K562 (cell line): ENCODE measurements at regions of chr16 and their contacts with region 1.

Region 1: DNA sequence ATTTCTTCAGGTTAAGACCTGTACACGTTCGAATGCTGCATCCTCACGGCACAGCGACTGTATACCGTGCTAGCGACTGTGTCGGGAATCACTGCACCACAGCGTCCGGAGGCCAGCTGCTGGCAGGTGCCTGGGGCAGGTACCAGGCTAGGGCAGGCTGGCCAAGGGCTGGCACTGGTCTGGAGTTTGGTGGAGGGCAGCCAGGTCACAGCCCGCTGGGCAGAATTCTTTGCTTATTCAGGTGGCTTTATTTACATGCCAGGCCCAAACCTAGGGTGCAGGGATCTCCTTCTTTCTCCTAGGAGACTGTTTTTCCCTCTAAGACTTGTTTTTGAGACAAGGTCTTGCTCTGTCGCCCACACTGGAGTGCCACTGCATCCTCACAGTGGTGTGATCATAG is 37.9 kb downstream of the COTL1 start:
- DNase-seq: no peak
- ATAC-seq: no peak
- H3K4me3 ChIP-seq: no peak overlapping the region
- H3K27ac ChIP-seq: no peak overlapping the region
- H3K4me1 ChIP-seq: peaks cover 7% of the 10 kb centered on the region in 2 experiments; a peak in 2 of 5 replicates
- H3K27me3 ChIP-seq: no peaks in the 10 kb centered on the region; a peak in 1 of 5 replicates
- CTCF ChIP-seq: no peak
- EP300 ChIP-seq: no peak
- POLR2A ChIP-seq: no peak
- RAD21 ChIP-seq: no peak

Region 2: DNA sequence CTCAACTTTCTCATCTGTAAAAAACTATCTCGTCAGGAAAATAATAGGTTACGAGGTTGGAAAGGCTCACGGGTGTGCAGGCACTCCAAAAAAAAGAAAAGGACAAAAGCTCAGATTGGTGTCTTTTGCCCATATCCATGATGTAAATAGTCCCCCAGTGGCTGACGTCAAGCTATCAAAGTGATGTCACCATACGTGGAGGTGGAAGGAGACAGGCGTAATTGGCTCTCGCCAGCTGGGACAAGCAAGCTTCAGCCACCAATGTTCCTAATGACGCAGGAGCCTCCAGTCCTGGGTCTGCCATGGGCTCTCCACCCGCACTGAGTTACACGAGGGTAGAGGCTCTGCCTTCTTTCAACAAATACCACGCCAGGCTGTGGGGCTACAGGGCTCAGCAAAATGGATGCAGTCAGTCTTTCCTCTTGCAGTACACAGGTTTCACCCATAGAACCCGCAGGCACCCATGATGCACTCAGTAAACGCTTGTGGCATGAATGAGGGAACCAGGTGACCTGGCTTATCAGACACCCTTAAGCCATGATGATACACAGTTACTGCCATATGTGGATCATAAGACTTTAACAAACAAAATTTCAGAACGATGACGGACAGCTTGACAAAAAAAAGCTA is 12.5 kb before region 1 on chr16:
- CTCF ChIA-PET with region 1: no interaction called
- POLR2A ChIA-PET with region 1: interaction called, 15 read pairs
- in situ Hi-C with region 1: no loop called
- intact Hi-C with region 1: no loop called
- DNase-seq: no peak
- ATAC-seq: no peak
- H3K4me3 ChIP-seq: no peak overlapping the region
- H3K27ac ChIP-seq: no peak overlapping the region
- H3K4me1 ChIP-seq: peaks cover 0 to 6% of the 10 kb centered on the region in 2 experiments; a peak in 2 of 5 replicates
- H3K27me3 ChIP-seq: no peaks in the 10 kb centered on the region
- CTCF ChIP-seq: no peak
- EP300 ChIP-seq: no peak
- POLR2A ChIP-seq: no peak
- RAD21 ChIP-seq: no peak

Region 3: DNA sequence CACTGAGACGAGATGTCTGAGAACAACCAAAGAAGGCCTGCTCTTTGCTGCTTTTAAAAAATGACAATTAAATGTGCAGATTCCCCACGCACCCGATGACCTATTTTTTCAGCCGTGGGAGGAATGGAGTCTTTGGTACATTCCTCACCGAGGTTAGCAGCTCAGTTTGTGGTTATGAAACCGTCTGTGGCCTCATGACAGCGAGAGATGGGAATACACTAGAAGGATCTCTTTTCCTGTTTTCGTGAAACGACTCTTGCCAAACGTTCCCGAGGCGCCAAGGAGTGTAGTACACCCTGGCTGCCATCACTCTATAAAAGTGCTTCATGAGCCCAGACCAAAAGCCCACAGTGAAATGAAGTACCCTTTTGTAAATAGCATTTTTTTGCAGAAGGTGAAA is 327.6 kb after region 1 on chr16:
- CTCF ChIA-PET with region 1: no interaction called
- POLR2A ChIA-PET with region 1: no interaction called
- in situ Hi-C with region 1: no loop called
- intact Hi-C with region 1: no loop called
- DNase-seq: no peak
- ATAC-seq: no peak
- H3K4me3 ChIP-seq: no peak overlapping the region
- H3K27ac ChIP-seq: no peak overlapping the region
- H3K4me1 ChIP-seq: no peaks in the 10 kb centered on the region
- H3K27me3 ChIP-seq: peaks cover 61 to 88% of the 10 kb centered on the region in 2 experiments
- CTCF ChIP-seq: no peak
- EP300 ChIP-seq: no peak
- POLR2A ChIP-seq: no peak
- RAD21 ChIP-seq: no peak